Heart right ventricle (tissue), 16 donors: ENCODE measurements at regions of chr7 and their contacts with region 1.

Region 1: GRCh38 chr7:51350200-51350921 is 33.8 kb upstream of the COBL start:
- DNase-seq: no peak
- ATAC-seq: peak in 7 of 8 donors; percentile 11 to 96 (median 73)
- H3K4me3 ChIP-seq: no peak overlapping the region
- H3K27ac ChIP-seq: no peak overlapping the region
- H3K4me1 ChIP-seq: peaks cover 0 to 10% (median 0%) of the 10 kb centered on the region in 9 donors
- H3K27me3 ChIP-seq: no peaks in the 10 kb centered on the region
- CTCF ChIP-seq: no peak

Region 2: GRCh38 chr7:51187941-51188340 is 162.4 kb before region 1 on chr7:
- intact Hi-C with region 1: loop called in 3 of 10 experiments (anchors 5 to 10 kb)
- DNase-seq: peak; percentile 33 to 47
- ATAC-seq: peak; percentile 63 to 86 (median 77)
- H3K4me3 ChIP-seq: no peak overlapping the region
- H3K27ac ChIP-seq: peak overlapping the region in 7 of 10 donors; percentile 17 to 69 (median 52)
- H3K4me1 ChIP-seq: peaks cover 0 to 44% (median 21%) of the 10 kb centered on the region in 9 donors
- H3K27me3 ChIP-seq: no peaks in the 10 kb centered on the region
- CTCF ChIP-seq: peak in 7 of 9 donors; percentile 15 to 50 (median 30)

Region 3: DNA sequence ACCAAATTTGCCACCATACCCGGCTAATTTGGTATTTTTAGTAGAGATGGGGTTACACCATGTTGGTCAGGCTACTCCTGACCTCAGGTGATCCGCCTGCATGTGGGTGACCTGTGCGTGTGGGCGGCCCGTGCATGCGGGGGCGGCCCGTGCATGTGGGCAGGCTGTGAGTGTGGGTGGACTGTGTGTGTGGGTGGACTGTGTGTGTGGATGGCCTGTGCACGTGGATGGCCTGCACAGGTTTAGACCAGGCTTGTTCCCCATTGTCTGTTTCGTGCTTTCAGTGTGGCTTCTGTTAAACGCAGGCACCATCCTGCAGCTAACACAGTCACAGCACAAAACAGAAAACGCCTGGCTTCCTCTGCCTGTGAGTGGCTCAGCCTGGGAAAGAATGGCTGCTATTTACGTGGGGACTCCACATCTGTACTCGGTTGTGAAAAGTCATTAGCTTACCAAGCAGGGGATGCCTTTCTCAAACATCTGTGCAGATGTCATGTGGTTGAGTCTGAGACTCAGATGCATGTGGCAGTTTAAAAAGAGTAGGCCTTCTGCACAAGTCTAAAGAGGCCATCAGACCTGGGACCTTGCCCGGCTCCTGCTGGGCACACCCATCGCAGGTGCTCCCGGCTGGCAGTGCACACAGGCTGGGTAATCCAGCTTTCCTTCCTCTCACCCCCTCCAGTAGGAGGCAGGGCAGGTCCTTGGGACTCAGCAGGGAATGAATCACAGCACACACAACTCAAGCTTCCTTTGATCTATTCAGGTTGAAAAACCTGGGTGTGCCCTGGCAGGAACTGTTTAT is 125.3 kb before region 1 on chr7:
- intact Hi-C with region 1: loop called in 1 of 10 experiments (anchors 10 kb)
- DNase-seq: no peak
- ATAC-seq: peak in 6 of 8 donors; percentile 49 to 66 (median 53)
- H3K4me3 ChIP-seq: no peak overlapping the region
- H3K27ac ChIP-seq: no peak overlapping the region
- H3K4me1 ChIP-seq: peaks cover 0 to 4% (median 0%) of the 10 kb centered on the region in 9 donors
- H3K27me3 ChIP-seq: no peaks in the 10 kb centered on the region
- CTCF ChIP-seq: peak in 6 of 9 donors; percentile 19 to 41 (median 28)

Region 4: DNA sequence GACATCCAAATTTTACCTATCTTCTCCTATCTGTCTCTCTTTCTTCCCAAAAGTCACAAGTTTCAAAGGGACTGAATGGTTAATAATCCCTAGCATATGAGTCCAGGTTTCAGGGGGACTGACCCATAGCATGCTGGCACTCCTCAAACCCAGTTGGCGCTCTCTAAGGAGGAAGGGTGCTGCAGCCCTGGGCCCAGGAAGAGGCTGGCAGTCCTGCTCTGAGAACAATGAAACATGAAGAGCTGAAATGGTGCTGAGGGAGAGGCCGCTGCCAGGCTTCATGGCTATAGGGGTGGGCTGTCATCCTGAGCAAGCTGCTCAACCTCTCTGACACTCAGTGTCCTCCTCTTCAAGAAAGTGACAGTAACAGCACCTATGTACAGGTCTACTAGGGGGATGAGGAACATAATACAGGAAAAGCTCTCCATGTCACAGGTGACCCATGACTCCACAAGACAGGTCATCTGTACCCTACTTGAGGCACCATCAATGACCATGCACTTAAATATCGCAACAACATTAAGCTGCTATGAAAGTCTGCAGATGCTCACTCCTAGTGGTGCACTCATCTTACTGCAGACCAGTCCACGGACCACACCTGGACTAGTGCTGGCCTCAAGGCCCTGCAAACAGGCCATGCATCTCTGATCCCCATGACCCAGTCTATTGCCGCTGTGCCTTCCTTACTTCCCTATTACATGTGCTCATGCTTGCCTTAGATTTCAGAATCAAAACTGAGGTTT is 50.8 kb before region 1 on chr7:
- intact Hi-C with region 1: loop called in 1 of 10 experiments (anchors 10 kb)
- DNase-seq: no peak
- ATAC-seq: no peak
- H3K4me3 ChIP-seq: no peak overlapping the region
- H3K27ac ChIP-seq: peak overlapping the region in 2 of 10 donors; percentile 29 to 85
- H3K4me1 ChIP-seq: peaks cover 0 to 51% (median 20%) of the 10 kb centered on the region in 9 donors
- H3K27me3 ChIP-seq: no peaks in the 10 kb centered on the region
- CTCF ChIP-seq: peak in 2 of 9 donors; percentile 12 to 16

Region 5: GRCh38 chr7:51315393-51316261 is 34.7 kb before region 1 on chr7:
- intact Hi-C with region 1: loop called in 2 of 10 experiments (anchors 5 kb)
- DNase-seq: peak in 1 of 2 donors; percentile 22
- ATAC-seq: peak; percentile 49 to 76 (median 66)
- H3K4me3 ChIP-seq: peak overlapping the region; percentile 49 to 71 (median 64)
- H3K27ac ChIP-seq: peak overlapping the region; percentile 44 to 80 (median 74)
- H3K4me1 ChIP-seq: peaks cover 0 to 23% (median 7%) of the 10 kb centered on the region in 9 donors
- H3K27me3 ChIP-seq: peaks cover 0 to 55% (median 22%) of the 10 kb centered on the region in 7 donors
- CTCF ChIP-seq: no peak

Region 6: DNA sequence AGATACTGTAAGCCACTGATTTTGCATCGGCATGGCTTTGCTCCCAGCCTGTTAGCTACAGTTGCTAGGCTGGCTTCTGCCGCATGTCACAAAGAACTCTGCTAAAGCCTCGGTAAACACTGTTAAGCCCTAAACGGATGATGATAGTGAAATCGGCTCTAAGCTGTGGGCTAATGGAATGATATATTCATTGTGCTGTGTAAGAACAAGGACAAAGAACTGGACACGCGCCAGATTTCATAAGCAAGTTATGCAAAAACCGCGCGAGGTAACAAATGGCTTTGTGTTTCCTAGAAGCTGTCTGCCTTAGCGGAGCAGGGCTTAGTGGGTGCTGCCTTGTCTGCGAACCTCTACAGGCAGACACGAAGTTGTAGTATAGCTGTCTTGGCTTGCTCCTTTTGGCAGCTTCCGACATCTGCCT is 297.6 kb after region 1 on chr7:
- intact Hi-C with region 1: no loop called
- DNase-seq: no peak
- ATAC-seq: peak in 3 of 8 donors; percentile 30 to 73 (median 39)
- H3K4me3 ChIP-seq: no peak overlapping the region
- H3K27ac ChIP-seq: no peak overlapping the region
- H3K4me1 ChIP-seq: peaks cover 0 to 7% (median 0%) of the 10 kb centered on the region in 9 donors
- H3K27me3 ChIP-seq: no peaks in the 10 kb centered on the region
- CTCF ChIP-seq: no peak